Sigmoid colon (tissue), 7 donors: ENCODE measurements at regions of chr22 and their contacts with region 1.

Region 1: GRCh38 chr22:21567456-21568346 is at the start of gene UBE2L3:
- DNase-seq: peak; percentile 88
- H3K4me3 ChIP-seq: peak within 1 kb of the TSS; percentile 85 to 98 (median 93)
- H3K27ac ChIP-seq: peak within 1 kb of the TSS; percentile 92 to 94 (median 94)
- H3K4me1 ChIP-seq: peaks cover 0 to 45% (median 42%) of the 10 kb centered on the region in 4 donors
- H3K27me3 ChIP-seq: no peaks in the 10 kb centered on the region
- CTCF ChIP-seq: no peak
- EP300 ChIP-seq: peak in 1 of 4 donors; percentile 6
- POLR2A ChIP-seq: peak in 1 of 2 donors; percentile 25
- total RNA-seq, gene UBE2L3: 36.1 to 50.7 (median 43.3) TPM

Region 2: DNA sequence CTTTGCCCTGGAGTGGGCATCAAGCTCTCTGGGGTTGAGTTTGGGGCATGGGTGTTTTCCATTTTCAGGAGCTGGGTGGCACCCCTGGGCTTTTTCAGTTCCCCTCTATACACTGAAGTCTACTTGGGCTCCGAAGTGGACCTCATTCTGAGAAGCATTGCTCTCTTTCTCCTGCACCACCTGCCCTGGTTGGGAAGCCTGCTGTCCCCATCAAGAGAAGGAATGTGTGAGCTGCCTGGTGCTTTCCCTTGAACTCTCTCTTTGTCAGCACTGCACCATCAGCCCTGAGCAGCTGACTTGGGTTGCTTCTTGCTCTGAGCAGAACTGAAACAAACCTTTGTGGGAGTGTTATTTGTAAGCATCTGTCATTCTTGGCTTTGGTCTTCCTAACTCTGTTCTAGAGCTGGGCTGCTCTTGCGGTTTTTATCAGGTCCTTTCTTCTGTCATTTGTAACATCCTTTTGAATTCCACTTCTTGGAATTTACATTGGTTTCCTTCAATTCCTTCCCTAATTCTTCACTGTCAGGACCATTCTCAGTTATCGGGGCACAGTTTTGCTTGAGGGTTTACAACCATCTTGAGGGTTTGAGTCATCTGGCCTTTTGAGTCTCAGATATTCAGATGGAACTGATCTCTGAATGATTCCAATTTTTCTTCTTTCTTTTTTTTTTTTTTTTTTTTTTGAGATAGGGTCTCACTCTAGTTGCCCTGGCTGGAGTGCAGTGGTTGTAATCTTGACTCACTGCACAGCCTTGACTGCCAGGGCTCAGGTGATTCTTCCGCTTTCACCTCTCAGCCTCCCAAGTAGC is 20.3 kb after region 1 on chr22:
- intact Hi-C with region 1: no loop called
- DNase-seq: no peak
- H3K4me3 ChIP-seq: no peak overlapping the region
- H3K27ac ChIP-seq: peak overlapping the region in 1 of 4 donors; percentile 34
- H3K4me1 ChIP-seq: peaks cover 0 to 57% (median 44%) of the 10 kb centered on the region in 4 donors
- H3K27me3 ChIP-seq: no peaks in the 10 kb centered on the region
- CTCF ChIP-seq: no peak
- EP300 ChIP-seq: no peak
- POLR2A ChIP-seq: no peak

Region 3: DNA sequence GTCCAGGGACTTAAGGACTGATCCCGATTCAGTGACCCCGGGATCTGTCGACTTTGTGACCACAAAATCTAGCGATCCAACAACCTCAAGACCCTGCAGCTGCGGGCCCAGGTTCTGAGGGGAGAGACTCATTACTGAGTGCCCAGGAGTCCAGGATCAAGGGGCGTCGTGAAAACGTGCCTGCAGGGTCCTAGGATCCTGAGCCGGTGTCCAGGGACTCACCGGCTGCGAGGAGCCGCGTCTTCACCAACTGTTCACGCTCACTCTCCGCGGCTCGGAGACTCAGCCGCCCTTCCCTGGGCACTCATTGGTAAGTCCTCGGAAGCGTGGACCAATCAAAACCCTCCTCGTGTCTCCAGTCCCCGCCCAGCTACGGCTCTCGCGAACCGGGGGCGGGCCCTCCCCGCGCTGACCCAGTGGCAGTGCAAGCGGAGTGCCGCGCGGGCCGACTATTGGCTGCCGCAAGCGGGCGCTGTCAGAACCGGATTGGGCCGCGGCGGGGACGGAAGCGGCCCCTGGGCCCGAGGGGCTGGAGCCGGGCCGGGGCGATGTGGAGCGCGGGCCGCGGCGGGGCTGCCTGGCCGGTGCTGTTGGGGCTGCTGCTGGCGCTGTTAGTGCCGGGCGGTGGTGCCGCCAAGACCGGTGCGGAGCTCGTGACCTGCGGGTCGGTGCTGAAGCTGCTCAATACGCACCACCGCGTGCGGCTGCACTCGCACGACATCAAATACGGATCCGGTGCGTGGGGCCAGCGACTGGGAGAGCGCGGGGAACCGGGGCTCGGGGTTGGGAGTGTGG is 74.3 kb after region 1 on chr22 and contains the start of gene SDF2L1:
- intact Hi-C with region 1: loop called (anchors 2 kb)
- DNase-seq: peak; percentile 99
- H3K4me3 ChIP-seq: peak within 1 kb of the TSS; percentile 48 to 69 (median 66)
- H3K27ac ChIP-seq: peak within 1 kb of the TSS; percentile 67 to 79 (median 74)
- H3K4me1 ChIP-seq: peaks cover 0 to 30% (median 20%) of the 10 kb centered on the region in 4 donors
- H3K27me3 ChIP-seq: no peaks in the 10 kb centered on the region
- CTCF ChIP-seq: no peak
- EP300 ChIP-seq: no peak
- POLR2A ChIP-seq: peak in 1 of 2 donors; percentile 9
- total RNA-seq, gene SDF2L1: 6.1 to 38.8 (median 24.4) TPM

Region 4: DNA sequence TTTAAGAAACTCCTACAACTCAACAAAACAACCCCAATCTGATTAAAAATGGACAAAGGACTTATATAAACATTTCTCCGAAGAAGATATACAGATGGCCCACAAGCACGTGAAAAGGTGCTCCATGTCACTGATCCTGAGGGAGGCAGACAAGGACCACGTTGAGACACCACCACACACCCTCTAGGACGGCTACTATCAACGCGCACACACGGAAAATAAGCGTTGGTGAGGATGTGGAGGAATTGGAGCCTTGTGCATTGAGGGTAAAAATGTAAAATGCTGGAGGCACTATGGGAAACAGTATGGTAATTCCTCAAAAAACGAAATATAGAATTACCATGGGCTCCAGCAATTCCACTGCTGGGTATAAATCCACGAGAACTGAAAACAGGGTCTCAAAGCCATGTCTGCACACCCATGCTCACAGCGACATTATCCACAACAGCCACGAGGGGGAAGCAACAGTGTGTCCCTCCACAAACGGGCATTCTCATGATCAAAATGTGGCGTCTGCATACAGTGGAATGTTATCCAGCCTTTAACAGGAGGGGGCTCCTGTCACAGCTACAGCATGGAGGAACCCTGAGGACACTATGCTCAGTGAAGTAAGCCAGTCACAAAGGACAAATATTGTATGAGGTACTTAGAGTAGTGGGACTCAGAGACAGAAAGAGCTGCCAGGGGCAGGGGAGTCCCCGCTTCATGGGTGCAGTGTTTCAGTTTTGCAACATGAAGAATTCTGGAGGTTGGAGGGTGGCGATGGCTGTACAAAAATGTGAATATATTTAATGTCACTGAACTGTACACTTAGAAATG is 145.4 kb after region 1 on chr22:
- intact Hi-C with region 1: no loop called
- DNase-seq: no peak
- H3K4me3 ChIP-seq: peak overlapping the region in 2 of 4 donors; percentile 7 to 14
- H3K27ac ChIP-seq: peak overlapping the region; percentile 0 to 54 (median 19)
- H3K4me1 ChIP-seq: peaks cover 0 to 15% (median 6%) of the 10 kb centered on the region in 4 donors
- H3K27me3 ChIP-seq: no peaks in the 10 kb centered on the region
- CTCF ChIP-seq: peak; percentile 75 to 84 (median 82)
- EP300 ChIP-seq: no peak
- POLR2A ChIP-seq: no peak

Region 5: GRCh38 chr22:21754523-21754922 is 186.8 kb after region 1 on chr22:
- intact Hi-C with region 1: no loop called
- DNase-seq: peak; percentile 68
- H3K4me3 ChIP-seq: no peak overlapping the region
- H3K27ac ChIP-seq: peak overlapping the region in 2 of 4 donors; percentile 27 to 61
- H3K4me1 ChIP-seq: peaks cover 0 to 14% (median 4%) of the 10 kb centered on the region in 4 donors
- H3K27me3 ChIP-seq: no peaks in the 10 kb centered on the region
- CTCF ChIP-seq: no peak
- EP300 ChIP-seq: no peak
- POLR2A ChIP-seq: no peak